Mammary epithelial cell (primary cell): ENCODE measurements at regions of chr2 and their contacts with region 1.

Region 1: DNA sequence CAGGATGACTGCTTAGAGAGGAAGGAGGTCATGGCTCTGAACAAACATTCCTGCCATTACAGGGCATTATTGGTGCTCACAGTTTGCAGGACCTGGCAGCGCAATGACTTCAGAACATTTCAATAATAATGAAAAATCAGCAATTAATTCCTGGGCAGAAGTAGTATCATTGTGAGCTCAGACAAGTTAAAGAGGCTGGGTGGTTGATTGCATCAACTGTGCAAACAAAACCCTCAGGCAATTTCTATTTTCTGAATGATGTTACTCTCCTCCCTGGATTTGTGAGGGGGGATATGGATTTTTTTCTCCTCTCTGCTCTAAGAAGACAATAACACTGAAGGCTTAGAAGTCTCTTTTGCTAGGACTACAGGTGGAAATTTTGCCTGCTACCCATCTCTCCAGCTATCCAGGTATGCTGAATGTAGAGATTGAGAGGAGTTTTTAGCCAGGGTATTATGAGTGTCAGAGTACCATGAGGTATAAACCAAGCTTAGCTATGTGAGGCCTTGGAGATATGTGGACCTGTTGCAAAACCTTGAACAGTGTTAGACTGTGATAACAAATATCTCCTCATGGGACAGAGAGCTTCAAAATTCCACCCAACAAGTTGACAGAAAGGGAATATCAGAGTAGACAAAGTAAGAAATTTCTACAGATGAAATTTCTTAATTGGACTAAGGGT is 168.2 kb upstream of the TACR1 start:
- DNase-seq: no peak
- H3K4me3 ChIP-seq: no peak overlapping the region
- H3K27ac ChIP-seq: no peak overlapping the region
- H3K4me1 ChIP-seq: no peaks in the 10 kb centered on the region
- H3K27me3 ChIP-seq: peaks cover 3% of the 10 kb centered on the region
- CTCF ChIP-seq: no peak

Region 2: DNA sequence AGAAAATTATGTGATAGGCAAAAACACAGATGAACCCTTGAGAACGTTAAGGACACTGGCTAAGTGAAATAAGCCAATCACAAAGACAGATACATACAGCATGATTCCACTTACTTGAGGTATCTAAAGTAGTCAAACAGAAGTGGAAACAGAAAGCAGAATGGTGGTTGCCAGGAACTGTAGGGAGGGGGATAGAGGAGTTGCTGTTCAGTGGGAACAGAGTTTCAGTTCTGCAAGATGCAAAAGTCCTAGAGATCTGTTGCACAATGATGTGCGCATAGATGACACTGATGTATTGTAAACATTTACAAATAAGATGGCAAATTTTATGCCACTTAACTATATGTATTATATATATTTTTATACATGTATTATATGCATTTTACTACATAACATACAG is 349.4 kb before region 1 on chr2:
- CTCF ChIA-PET with region 1: no interaction called
- dilution Hi-C with region 1: no loop called
- in situ Hi-C with region 1: no loop called
- intact Hi-C with region 1: no loop called
- DNase-seq: no peak
- H3K4me3 ChIP-seq: no peak overlapping the region
- H3K27ac ChIP-seq: no peak overlapping the region
- H3K4me1 ChIP-seq: no peaks in the 10 kb centered on the region
- H3K27me3 ChIP-seq: no peaks in the 10 kb centered on the region
- CTCF ChIP-seq: no peak

Region 3: DNA sequence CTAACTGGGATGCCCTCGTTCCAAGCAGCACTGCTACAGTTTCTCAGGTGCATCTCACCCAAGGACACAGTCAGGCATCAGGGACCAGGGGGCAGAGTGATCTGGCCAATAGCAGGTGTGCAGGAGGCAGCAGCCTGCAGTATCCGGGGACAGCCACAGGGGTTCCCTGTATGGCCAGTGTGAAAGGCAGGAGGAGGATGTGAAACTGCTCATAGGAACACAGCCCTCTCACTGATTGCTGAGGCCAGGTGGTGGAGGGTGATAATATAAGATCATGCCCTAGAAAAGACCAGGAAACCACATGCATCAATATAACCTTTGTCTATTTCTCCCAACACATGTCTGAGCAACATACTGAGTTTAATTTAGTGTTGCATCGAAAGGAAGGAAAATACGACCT is 55.5 kb before region 1 on chr2:
- CTCF ChIA-PET with region 1: no interaction called
- dilution Hi-C with region 1: loop called (anchors 5 kb)
- in situ Hi-C with region 1: no loop called
- intact Hi-C with region 1: no loop called
- DNase-seq: no peak
- H3K4me3 ChIP-seq: no peak overlapping the region
- H3K27ac ChIP-seq: no peak overlapping the region
- H3K4me1 ChIP-seq: peaks cover 7% of the 10 kb centered on the region
- H3K27me3 ChIP-seq: peaks cover 2% of the 10 kb centered on the region
- CTCF ChIP-seq: peak in 1 of 2 donors; percentile 10

Region 4: DNA sequence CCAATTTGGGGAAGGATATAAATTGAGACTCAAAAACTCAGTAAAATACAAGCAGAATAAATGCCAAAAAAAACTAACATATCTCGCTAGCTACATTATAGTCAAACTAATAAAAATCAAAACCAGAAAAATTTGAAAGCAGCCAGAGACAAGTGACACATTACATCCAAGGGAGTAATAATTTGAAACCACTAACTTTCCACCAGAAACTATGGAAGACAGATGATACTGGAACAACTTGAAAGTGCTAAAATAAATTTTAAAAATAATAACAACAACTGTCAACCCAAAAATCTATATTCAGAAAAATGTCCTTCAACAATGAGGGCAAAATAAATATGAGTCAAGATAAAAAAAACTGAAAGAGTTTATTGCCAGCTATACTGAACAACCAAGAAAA is 82.5 kb after region 1 on chr2:
- CTCF ChIA-PET with region 1: no interaction called
- dilution Hi-C with region 1: no loop called
- in situ Hi-C with region 1: no loop called
- intact Hi-C with region 1: no loop called
- DNase-seq: no peak
- H3K4me3 ChIP-seq: no peak overlapping the region
- H3K27ac ChIP-seq: no peak overlapping the region
- H3K4me1 ChIP-seq: no peaks in the 10 kb centered on the region
- H3K27me3 ChIP-seq: no peaks in the 10 kb centered on the region
- CTCF ChIP-seq: no peak